ENCODE measurements at regions of chr3 and their contacts with region 1.

Region 1: DNA sequence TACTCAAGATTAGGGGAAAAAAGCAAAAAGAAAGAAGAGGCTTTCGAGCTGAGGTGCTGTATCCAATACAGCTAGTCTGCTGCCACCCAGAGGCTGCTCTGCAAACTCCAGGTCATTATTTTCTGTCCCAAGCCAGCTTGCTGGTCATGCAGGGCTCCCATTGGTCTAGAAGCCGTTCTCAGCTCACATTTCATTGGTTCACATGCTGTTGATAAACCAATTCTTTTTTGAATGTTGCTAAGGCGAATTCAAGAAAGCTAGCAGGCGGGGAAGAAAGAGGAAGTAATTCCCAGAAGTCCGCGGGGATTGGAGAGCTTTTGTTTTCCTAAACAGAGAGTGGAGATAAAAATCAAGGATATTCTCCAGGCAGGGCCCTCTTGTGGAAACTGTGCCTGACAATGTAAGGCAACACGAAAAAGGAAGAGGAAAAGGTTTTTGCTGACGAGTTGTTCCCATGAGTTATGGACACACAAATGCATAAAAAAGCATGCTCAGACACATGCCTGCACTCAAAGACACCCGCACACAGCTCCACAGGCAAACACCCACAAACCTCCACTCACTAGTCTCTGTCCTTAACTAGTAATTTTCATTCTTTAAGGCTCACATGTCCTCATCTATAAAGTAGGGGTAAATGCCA is 33.4 kb downstream of the FSTL1 start:
- DNase-seq: peak; percentile 85 to 94 (median 89)
- ATAC-seq: peak; percentile 97 to 98 (median 98)
- H3K4me3 ChIP-seq: peak overlapping the region; percentile 7 to 31 (median 31)
- H3K27ac ChIP-seq: peak overlapping the region; percentile 15 to 33 (median 26)
- H3K4me1 ChIP-seq: peaks cover 0 to 27% (median 2%) of the 10 kb centered on the region in 4 donors
- H3K27me3 ChIP-seq: no peaks in the 10 kb centered on the region
- CTCF ChIP-seq: peak; percentile 91 to 96 (median 92)
- POLR2A ChIP-seq: no peak

Region 2: DNA sequence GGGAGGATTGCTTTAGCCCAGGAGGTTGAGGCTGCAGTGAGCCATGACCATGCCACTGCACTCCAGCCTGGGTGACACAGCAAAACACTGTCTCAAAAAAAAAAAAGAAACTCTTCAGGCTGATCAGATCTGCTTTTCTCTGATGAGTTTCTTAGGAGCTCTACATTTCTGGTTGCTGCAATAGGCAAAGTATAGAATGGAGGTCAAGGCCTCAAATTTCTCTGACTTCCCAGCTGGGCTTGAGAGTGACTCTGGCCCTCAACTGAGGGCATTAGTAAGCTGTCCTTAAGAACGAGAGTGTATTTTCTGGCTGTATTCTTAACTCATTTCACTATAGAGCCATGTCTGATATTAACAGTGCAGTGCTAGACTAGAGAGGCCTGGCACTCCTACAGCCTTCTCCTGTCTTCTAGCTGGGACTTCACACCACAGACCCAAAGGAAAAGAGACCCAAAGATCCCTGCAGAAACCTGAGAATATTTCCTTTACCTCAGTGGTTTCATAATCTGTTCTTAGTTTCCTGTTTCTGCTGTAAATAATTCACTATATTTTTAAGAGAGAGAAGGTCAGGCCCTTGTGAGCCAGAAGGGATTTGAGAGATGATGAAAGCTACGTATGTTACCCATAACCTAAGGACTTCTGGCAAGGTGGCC is 637.5 kb before region 1 on chr3:
- intact Hi-C with region 1: no loop called
- DNase-seq: no peak
- ATAC-seq: no peak
- H3K4me3 ChIP-seq: no peak overlapping the region
- H3K27ac ChIP-seq: no peak overlapping the region
- H3K4me1 ChIP-seq: peaks cover 0 to 3% (median 0%) of the 10 kb centered on the region in 4 donors
- H3K27me3 ChIP-seq: no peaks in the 10 kb centered on the region
- CTCF ChIP-seq: no peak
- POLR2A ChIP-seq: no peak

Region 3: DNA sequence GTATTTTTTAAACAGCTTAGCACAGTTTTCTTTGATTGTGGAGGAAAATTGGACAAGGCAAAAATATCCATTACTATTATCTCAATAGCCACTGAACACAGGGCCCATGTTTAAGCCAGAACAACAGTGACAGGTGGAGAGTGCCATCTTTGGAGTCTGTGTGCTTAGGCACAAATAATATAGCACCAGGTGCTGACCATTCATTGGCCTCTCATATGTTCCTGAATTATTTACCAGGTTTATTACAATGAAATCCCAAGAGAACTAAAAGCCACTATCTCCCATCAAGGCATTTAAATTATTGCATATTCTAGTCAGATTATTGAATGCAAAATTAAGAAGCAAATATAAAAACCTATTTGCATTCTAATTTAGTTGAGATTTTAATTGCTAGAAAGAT is 172.0 kb before region 1 on chr3:
- intact Hi-C with region 1: loop called (anchors 5 to 10 kb)
- DNase-seq: no peak
- ATAC-seq: no peak
- H3K4me3 ChIP-seq: no peak overlapping the region
- H3K27ac ChIP-seq: no peak overlapping the region
- H3K4me1 ChIP-seq: no peaks in the 10 kb centered on the region
- H3K27me3 ChIP-seq: no peaks in the 10 kb centered on the region
- CTCF ChIP-seq: no peak
- POLR2A ChIP-seq: no peak

Region 4: GRCh38 chr3:120596116-120596852 is 178.9 kb after region 1 on chr3 and contains the start of gene NDUFB4:
- intact Hi-C with region 1: no loop called
- DNase-seq: peak; percentile 98 to 99 (median 98)
- ATAC-seq: peak; percentile 98 to 99 (median 99)
- H3K4me3 ChIP-seq: peak within 1 kb of the TSS; percentile 81 to 84 (median 81)
- H3K27ac ChIP-seq: peak within 1 kb of the TSS; percentile 94 to 95 (median 95)
- H3K4me1 ChIP-seq: peaks cover 0 to 24% (median 0%) of the 10 kb centered on the region in 4 donors
- H3K27me3 ChIP-seq: no peaks in the 10 kb centered on the region
- CTCF ChIP-seq: no peak
- POLR2A ChIP-seq: peak; percentile 74
- total RNA-seq, gene NDUFB4: 69.3 to 98.9 (median 77.5) TPM